Esophagus muscularis mucosa (tissue), 4 donors: ENCODE measurements at regions of chr19 and their contacts with region 1.

Region 1: DNA sequence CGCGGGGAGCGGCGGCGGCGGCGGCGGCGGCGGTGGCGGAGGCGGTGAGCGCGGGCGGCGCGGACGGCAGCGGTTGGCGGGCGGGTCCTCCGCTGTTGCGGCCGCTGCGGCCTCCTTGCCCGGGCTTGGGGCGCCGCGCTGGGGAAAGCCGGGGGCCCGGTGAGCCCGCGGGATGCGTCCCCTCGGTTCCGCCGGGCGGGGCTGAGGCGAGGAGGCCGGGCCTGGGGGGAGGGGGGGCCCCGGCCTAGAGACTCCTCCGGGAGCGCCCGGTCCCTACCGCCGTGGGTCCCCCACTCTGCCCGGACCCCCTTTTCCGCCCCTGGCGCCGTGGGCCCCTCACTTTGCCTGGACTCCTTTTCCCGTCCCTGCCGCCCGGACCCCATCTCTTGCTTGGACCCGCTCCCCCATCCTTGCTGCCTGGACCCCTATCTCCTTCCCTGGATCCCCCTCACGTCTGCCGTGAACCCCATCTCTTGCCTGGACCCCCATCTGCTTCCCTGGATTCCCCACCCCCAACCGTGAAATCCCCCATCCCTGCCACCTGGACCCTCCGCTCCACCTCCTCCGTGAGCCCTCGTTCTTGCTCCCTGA is 28.6 kb upstream of the NDUFS7 start:
- DNase-seq: no peak
- H3K4me3 ChIP-seq: peak overlapping the region; percentile 78 to 94 (median 92)
- H3K27ac ChIP-seq: peak overlapping the region; percentile 93 to 97 (median 95)
- H3K4me1 ChIP-seq: peaks cover 10 to 30% (median 29%) of the 10 kb centered on the region in 4 donors
- H3K27me3 ChIP-seq: no peaks in the 10 kb centered on the region
- CTCF ChIP-seq: no peak
- EP300 ChIP-seq: no peak
- POLR2A ChIP-seq: no peak

Region 2: DNA sequence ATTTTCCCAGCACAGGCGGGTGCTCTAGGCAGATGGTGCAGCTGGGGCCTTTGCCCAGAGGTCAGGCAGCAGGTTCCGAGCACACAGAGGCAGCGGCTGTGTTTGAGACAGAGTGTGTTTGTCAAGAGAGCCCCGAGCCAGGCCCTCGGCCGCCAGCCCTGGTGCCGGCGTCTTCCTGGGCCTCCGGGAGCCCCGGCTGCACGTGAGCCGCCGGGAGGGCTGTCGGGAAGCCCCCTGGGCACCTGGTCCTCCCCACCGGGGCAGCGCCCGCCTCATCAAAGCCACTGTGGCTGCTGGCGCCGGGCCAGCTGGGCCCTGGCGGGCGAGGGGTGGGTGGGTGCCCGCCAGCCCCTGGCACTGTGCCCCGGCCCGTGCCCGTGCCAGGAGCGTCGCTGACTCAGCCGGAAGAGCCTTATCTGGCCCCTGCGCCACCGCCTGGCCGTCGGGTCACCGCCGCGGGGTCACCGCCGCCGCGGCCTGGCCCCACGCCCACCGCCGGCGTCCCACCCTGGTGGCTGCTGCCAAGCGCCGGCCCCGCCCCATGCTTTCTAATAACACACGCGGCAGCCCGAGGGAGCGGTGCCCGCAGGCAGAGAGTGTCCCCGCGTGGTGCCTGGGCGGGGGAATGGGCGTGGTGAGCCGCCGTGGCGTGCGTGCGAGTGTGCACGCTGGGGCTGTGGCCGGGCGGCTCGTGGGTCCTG is 414.3 kb before region 1 on chr19:
- intact Hi-C with region 1: no loop called
- DNase-seq: no peak
- H3K4me3 ChIP-seq: peak overlapping the region; percentile 42 to 57 (median 44)
- H3K27ac ChIP-seq: peak overlapping the region; percentile 72 to 84 (median 79)
- H3K4me1 ChIP-seq: peaks cover 11 to 29% (median 24%) of the 10 kb centered on the region in 4 donors
- H3K27me3 ChIP-seq: no peaks in the 10 kb centered on the region
- CTCF ChIP-seq: peak in 1 of 3 experiments; percentile 14
- EP300 ChIP-seq: no peak
- POLR2A ChIP-seq: no peak

Region 3: GRCh38 chr19:1279782-1280341 is 75.2 kb before region 1 on chr19:
- intact Hi-C with region 1: loop called (anchors 5 kb)
- DNase-seq: no peak
- H3K4me3 ChIP-seq: no peak overlapping the region
- H3K27ac ChIP-seq: peak overlapping the region in 1 of 4 donors; percentile 6
- H3K4me1 ChIP-seq: peaks cover 13 to 35% (median 23%) of the 10 kb centered on the region in 4 donors
- H3K27me3 ChIP-seq: peaks cover 0 to 23% (median 7%) of the 10 kb centered on the region in 4 donors
- CTCF ChIP-seq: peak; percentile 81 to 99 (median 85)
- EP300 ChIP-seq: no peak
- POLR2A ChIP-seq: no peak

Region 4: GRCh38 chr19:1383311-1384084 is 28.4 kb after region 1 on chr19 and contains the start of gene NDUFS7:
- intact Hi-C with region 1: loop called (anchors 1 kb)
- DNase-seq: peak; percentile 98
- H3K4me3 ChIP-seq: peak within 1 kb of the TSS; percentile 72 to 99 (median 90)
- H3K27ac ChIP-seq: peak within 1 kb of the TSS; percentile 87 to 95 (median 93)
- H3K4me1 ChIP-seq: peaks cover 43 to 61% (median 49%) of the 10 kb centered on the region in 4 donors
- H3K27me3 ChIP-seq: no peaks in the 10 kb centered on the region
- CTCF ChIP-seq: peak in 2 of 3 experiments; percentile 21 to 25
- EP300 ChIP-seq: no peak
- POLR2A ChIP-seq: peak; percentile 50
- total RNA-seq, gene NDUFS7: 85.6 to 110 (median 89.4) TPM